PC-9 (cell line): ENCODE measurements at regions of chr10 and their contacts with region 1.

Region 1: DNA sequence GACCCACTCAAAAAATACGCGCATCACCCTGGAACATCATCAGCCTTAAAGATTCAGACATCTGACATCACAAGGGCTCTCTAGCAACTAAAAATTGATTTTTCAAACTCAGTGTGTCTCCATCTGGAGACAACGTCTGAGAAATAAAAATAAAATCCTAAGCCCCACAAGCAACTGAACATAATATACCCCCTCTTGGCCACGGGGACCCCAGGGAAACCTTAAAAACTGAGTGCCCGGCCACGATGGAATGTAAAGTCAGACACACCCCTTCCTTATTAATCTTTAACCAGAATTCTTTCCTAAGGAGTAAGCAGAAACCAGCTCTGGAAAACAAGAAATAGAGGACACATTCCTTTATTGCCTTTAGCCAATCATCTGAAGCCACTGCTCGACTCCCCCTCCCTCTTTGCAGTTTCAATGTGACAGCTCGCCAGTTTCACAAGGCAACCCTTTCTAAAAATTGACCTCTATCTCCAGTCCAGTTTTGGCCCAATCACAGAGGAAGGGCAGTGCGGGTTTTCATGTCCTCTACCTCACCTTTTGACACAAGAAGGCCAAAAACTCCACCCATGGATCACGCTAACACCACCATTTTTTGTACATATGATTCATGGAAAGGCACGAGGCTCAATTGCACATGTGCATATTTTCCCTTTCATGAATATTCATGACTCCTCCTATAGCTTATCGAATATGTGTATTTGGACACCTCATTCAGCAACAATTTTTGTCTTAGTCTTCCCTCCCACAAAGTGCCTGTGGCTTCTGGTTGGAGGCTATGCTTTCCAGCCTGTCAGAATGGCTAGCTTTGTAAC is 24.2 kb downstream of the IFIT3 start:
- DNase-seq: peak; percentile 76 to 95
- H3K4me3 ChIP-seq: peak overlapping the region; percentile 32; the same call in 1 of the 2 replicates
- H3K27ac ChIP-seq: peak overlapping the region; percentile 100
- H3K4me1 ChIP-seq: peaks cover 37% of the 10 kb centered on the region
- H3K27me3 ChIP-seq: no peaks in the 10 kb centered on the region
- CTCF ChIP-seq: no peak

Region 2: GRCh38 chr10:89183571-89183970 is 168.4 kb before region 1 on chr10:
- CTCF ChIA-PET with region 1: no interaction called
- POLR2A ChIA-PET with region 1: no interaction called
- intact Hi-C with region 1: no loop called
- DNase-seq: no peak
- H3K4me3 ChIP-seq: no peak overlapping the region
- H3K27ac ChIP-seq: no peak overlapping the region
- H3K4me1 ChIP-seq: peaks cover 5% of the 10 kb centered on the region; the same call in 1 of the 2 replicates
- H3K27me3 ChIP-seq: no peaks in the 10 kb centered on the region
- CTCF ChIP-seq: no peak

Region 3: GRCh38 chr10:89262086-89263051 is 89.6 kb before region 1 on chr10:
- CTCF ChIA-PET with region 1: interaction called, 6 read pairs
- POLR2A ChIA-PET with region 1: interaction called, 4 read pairs
- intact Hi-C with region 1: loop called (anchors 1 kb)
- DNase-seq: peak; percentile 45 to 96
- H3K4me3 ChIP-seq: peak overlapping the region; percentile 20; the same call in 1 of the 2 replicates
- H3K27ac ChIP-seq: peak overlapping the region; percentile 95
- H3K4me1 ChIP-seq: peaks cover 43% of the 10 kb centered on the region
- H3K27me3 ChIP-seq: no peaks in the 10 kb centered on the region
- CTCF ChIP-seq: no peak

Region 4: DNA sequence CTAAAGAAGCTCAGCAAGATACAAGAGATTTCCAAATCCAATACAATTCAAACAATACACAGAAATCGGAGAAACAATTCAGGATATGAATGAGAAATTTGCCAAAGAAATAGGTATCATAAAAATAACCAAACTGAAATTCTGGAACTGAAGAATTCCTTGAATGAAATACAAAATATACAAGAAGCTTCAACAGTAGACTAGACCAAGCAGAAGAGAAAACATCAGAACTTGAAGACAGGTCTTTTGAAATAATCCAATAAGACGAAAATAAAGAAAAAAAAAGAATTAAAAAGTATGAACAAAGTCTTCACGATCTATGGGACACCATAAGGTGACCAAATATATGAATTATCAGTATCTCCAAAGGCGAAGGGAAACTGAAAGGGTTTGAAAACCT is 53.0 kb before region 1 on chr10:
- CTCF ChIA-PET with region 1: no interaction called
- POLR2A ChIA-PET with region 1: interaction called, 10 read pairs
- intact Hi-C with region 1: no loop called
- DNase-seq: no peak
- H3K4me3 ChIP-seq: no peak overlapping the region
- H3K27ac ChIP-seq: no peak overlapping the region
- H3K4me1 ChIP-seq: peaks cover 39% of the 10 kb centered on the region
- H3K27me3 ChIP-seq: no peaks in the 10 kb centered on the region
- CTCF ChIP-seq: no peak

Region 5: DNA sequence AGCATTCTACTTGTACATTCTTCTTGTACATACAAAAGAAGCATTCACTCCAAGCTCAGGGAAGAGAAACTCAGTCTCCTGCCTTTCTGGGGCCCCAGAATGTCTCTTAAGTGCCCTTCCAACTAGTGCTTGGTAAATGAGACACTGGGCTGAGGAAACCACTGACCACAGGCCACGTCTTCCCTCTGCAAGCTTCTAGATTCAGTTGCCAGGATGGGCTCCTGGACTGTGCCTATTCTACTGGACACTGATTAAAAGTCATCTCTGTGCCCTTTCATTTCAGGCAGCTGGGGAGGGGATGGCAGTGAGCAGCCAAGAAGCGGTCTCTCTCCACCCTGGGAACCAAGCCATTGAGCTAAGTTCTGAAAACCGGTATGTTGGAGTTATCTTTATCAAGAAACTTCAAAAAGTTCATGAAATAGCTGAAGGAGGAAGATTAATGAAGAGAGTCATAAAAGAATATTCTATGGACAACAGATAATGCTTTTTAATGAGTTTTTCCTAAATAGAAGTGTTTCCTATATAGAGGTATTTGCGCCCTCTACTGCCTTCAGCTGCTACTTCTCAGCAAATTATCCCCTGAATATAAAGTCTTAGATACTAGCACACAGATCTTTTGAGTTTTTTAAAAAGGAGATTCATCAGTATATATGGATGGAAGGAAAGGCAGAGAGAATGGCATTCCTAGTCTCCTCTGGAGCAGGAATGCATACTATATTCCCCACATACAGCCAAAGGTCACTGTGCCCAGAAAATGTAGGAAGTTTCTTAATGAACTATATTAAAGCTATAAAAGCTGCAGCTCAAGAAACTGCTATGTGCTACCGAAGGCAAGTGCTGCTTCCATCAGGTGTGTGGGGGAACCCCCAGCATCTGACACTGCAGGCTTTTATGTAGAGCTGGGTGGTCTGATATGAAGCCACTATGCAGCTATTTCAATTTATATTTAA is 17.4 kb after region 1 on chr10:
- CTCF ChIA-PET with region 1: no interaction called
- POLR2A ChIA-PET with region 1: interaction called, 15 read pairs
- intact Hi-C with region 1: no loop called
- DNase-seq: no peak
- H3K4me3 ChIP-seq: no peak overlapping the region
- H3K27ac ChIP-seq: no peak overlapping the region
- H3K4me1 ChIP-seq: peaks cover 13% of the 10 kb centered on the region
- H3K27me3 ChIP-seq: no peaks in the 10 kb centered on the region
- CTCF ChIP-seq: peak; percentile 64

Region 6: GRCh38 chr10:89502556-89502955 is 150.6 kb after region 1 on chr10:
- CTCF ChIA-PET with region 1: no interaction called
- POLR2A ChIA-PET with region 1: no interaction called
- intact Hi-C with region 1: no loop called
- DNase-seq: no peak
- H3K4me3 ChIP-seq: no peak overlapping the region
- H3K27ac ChIP-seq: no peak overlapping the region
- H3K4me1 ChIP-seq: no peaks in the 10 kb centered on the region
- H3K27me3 ChIP-seq: no peaks in the 10 kb centered on the region
- CTCF ChIP-seq: no peak